ENCODE measurements at regions of chr3 and their contacts with region 1.

Region 1: GRCh38 chr3:104711406-104711805 is 655.3 kb upstream of the ALCAM start:
- DNase-seq: no peak
- ATAC-seq: no peak
- H3K4me3 ChIP-seq: no peak overlapping the region
- H3K27ac ChIP-seq: no peak overlapping the region
- H3K4me1 ChIP-seq: no peaks in the 10 kb centered on the region
- H3K27me3 ChIP-seq: no peaks in the 10 kb centered on the region
- CTCF ChIP-seq: no peak

Region 2: DNA sequence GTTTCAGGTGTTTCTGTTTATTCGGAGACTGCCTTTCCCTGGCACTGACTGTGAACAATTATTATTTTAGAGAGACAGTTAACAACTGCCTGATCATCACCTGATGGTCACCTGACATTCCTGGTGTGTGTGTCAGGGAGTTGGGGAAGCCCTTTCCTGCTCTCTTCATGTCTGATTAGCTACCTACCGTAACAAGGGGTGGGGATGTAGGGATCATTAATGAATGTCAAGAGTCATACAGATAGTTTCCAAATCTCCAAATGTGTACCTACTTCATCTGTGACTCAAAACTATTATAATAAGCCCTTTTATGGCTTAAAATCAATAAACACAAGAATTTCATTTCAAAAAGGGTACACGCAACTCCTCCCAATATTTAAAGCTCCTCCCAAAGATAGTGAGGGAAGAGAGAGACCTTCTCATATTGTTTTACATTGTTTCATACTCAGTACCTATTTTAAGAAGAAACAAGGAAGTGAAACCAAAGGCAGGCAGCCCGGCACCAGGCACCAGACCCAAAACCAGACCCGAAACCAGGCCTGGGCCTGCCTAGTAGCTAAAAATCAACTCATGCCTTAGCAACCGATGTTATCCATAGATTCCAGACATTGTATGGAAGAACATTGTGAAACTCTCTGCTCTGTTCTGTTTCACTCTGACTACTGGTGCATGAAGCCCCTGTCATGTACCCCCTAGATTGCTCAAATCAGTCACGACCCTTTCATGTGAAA is 189.6 kb before region 1 on chr3:
- CTCF ChIA-PET with region 1: no interaction called
- POLR2A ChIA-PET with region 1: no interaction called
- in situ Hi-C with region 1: no loop called
- intact Hi-C with region 1: no loop called
- DNase-seq: no peak
- ATAC-seq: no peak
- H3K4me3 ChIP-seq: no peak overlapping the region
- H3K27ac ChIP-seq: no peak overlapping the region
- H3K4me1 ChIP-seq: no peaks in the 10 kb centered on the region
- H3K27me3 ChIP-seq: no peaks in the 10 kb centered on the region
- CTCF ChIP-seq: no peak

Region 3: GRCh38 chr3:104578558-104578957 is 132.8 kb before region 1 on chr3:
- CTCF ChIA-PET with region 1: no interaction called
- POLR2A ChIA-PET with region 1: interaction called, 23 read pairs
- in situ Hi-C with region 1: no loop called
- intact Hi-C with region 1: no loop called
- DNase-seq: no peak
- ATAC-seq: no peak
- H3K4me3 ChIP-seq: no peak overlapping the region
- H3K27ac ChIP-seq: no peak overlapping the region
- H3K4me1 ChIP-seq: no peaks in the 10 kb centered on the region
- H3K27me3 ChIP-seq: no peaks in the 10 kb centered on the region
- CTCF ChIP-seq: no peak